Left cardiac atrium (tissue), 4 donors: ENCODE measurements at regions of chr10 and their contacts with region 1.

Region 1: GRCh38 chr10:50325449-50326171 is 74.3 kb upstream of the ASAH2 start:
- DNase-seq: peak; percentile 75
- ATAC-seq: peak; percentile 85 to 94

Region 2: GRCh38 chr10:50375051-50375452 is 49.4 kb after region 1 on chr10:
- intact Hi-C with region 1: loop called in 1 of 2 experiments (anchors 10 kb)
- DNase-seq: no peak
- ATAC-seq: no peak